ENCODE measurements at regions of chr10 and their contacts with region 1.

Region 1: GRCh38 chr10:74738985-74739567 is 87.3 kb upstream of the KAT6B start:
- DNase-seq: peak; percentile 83
- ATAC-seq: peak; percentile 87
- H3K4me3 Mint-ChIP-seq: peak overlapping the region; percentile 60
- H3K27ac Mint-ChIP-seq: peak overlapping the region; percentile 93
- H3K4me1 Mint-ChIP-seq: peaks cover 27% of the 10 kb centered on the region
- H3K27me3 Mint-ChIP-seq: no peaks in the 10 kb centered on the region

Region 2: DNA sequence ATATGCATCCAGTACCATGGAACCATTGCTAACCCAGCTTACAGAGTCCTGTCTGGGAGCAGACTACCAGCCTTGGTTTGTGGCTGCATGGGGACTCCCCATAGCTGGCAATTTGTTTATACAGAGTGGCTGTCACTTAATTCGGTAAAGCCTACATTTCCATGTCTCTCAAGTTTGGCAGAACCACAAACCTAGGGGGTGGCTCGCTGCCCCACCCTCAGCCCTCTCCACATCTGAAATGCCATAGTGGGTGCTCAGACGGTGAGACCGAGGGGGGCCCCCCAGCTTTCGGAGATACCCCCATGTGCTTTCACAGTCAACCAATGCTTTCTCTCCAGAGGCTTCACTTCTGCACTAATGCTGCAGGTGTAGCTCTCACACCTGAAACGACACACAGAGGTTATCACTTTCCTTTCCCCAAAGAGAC is 11.8 kb after region 1 on chr10:
- CTCF ChIA-PET with region 1: interaction called, 16 read pairs
- DNase-seq: peak; percentile 45
- ATAC-seq: peak; percentile 48
- H3K4me3 Mint-ChIP-seq: no peak overlapping the region
- H3K27ac Mint-ChIP-seq: no peak overlapping the region
- H3K4me1 Mint-ChIP-seq: peaks cover 39% of the 10 kb centered on the region
- H3K27me3 Mint-ChIP-seq: no peaks in the 10 kb centered on the region

Region 3: DNA sequence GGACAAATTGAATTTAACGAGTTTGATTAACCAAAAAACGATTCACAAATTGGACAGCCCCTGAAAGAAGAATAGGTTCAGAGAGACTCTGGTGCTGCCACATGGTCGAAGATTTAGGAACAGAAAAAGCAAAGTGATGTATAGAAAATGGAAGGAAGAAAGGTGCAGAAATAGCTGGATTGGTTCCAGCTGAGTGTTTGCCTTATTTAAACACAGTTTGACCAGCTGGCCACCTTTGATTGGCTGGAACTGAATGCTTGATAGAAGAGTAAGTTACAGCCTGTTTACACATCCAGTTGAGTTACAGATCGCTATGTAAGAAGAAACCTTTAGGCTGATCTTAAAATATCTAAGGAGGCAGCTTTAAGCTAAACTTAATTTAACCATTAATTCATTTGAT is 47.0 kb after region 1 on chr10:
- CTCF ChIA-PET with region 1: no interaction called
- DNase-seq: no peak
- ATAC-seq: no peak
- H3K4me3 Mint-ChIP-seq: no peak overlapping the region
- H3K27ac Mint-ChIP-seq: no peak overlapping the region
- H3K4me1 Mint-ChIP-seq: no peaks in the 10 kb centered on the region
- H3K27me3 Mint-ChIP-seq: peaks cover 2% of the 10 kb centered on the region

Region 4: GRCh38 chr10:74824900-74825370 is 85.9 kb after region 1 on chr10:
- CTCF ChIA-PET with region 1: interaction called, 16 read pairs
- DNase-seq: peak; percentile 69
- ATAC-seq: peak; percentile 1
- H3K4me3 Mint-ChIP-seq: peak overlapping the region; percentile 84
- H3K27ac Mint-ChIP-seq: peak overlapping the region; percentile 85
- H3K4me1 Mint-ChIP-seq: peaks cover 41% of the 10 kb centered on the region
- H3K27me3 Mint-ChIP-seq: no peaks in the 10 kb centered on the region

Region 5: DNA sequence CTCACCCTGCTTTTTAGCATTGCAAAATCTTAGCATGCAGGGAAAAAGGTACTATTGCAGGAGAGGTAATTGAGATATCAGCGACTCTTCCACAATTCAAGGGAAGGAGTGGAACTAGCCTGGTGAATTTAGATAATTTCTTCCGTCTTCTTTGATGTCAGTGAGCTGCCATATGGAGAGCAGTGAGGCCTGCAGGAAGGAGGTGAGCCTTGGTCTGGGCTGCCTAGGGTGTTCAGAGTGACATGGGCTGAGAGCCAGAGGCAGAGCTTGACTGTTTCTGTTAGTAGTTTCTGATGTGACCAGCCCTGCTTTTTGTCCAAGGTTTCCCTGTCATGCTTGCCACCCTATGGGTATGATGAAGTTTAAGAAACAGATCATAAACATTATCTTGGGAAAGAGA is 116.0 kb after region 1 on chr10:
- CTCF ChIA-PET with region 1: no interaction called
- DNase-seq: no peak
- ATAC-seq: no peak
- H3K4me3 Mint-ChIP-seq: no peak overlapping the region
- H3K27ac Mint-ChIP-seq: no peak overlapping the region
- H3K4me1 Mint-ChIP-seq: peaks cover 11% of the 10 kb centered on the region
- H3K27me3 Mint-ChIP-seq: no peaks in the 10 kb centered on the region

Region 6: DNA sequence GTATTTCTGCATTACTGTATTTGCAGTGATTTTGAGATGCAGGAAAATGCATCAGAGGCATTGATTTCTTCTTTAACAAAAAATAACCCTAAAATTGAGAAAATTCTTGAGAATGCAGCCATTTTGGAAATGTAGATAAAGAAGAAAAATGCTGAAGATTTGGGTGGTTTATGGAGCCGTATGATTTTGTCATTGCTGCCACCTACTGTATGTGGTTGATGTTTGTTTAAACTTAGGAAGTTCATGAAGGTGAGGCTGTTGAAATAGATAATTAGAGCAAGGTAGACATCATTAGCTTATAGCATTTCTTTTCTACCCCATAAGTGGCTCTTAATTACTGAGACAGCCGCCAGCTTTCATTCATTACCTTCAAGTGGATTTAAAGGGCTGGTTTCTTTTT is 280.3 kb after region 1 on chr10:
- CTCF ChIA-PET with region 1: interaction called, 42 read pairs
- DNase-seq: no peak
- ATAC-seq: peak; percentile 66
- H3K4me3 Mint-ChIP-seq: no peak overlapping the region
- H3K27ac Mint-ChIP-seq: peak overlapping the region; percentile 41
- H3K4me1 Mint-ChIP-seq: peaks cover 23% of the 10 kb centered on the region
- H3K27me3 Mint-ChIP-seq: no peaks in the 10 kb centered on the region

Region 7: GRCh38 chr10:75099952-75100763 is 361.1 kb after region 1 on chr10:
- CTCF ChIA-PET with region 1: interaction called, 13 read pairs
- DNase-seq: peak; percentile 86
- ATAC-seq: peak; percentile 97
- H3K4me3 Mint-ChIP-seq: no peak overlapping the region
- H3K27ac Mint-ChIP-seq: no peak overlapping the region
- H3K4me1 Mint-ChIP-seq: peaks cover 2% of the 10 kb centered on the region
- H3K27me3 Mint-ChIP-seq: no peaks in the 10 kb centered on the region